ENCODE measurements at regions of chr4 and their contacts with region 1.

Region 1: GRCh38 chr4:69896530-69897116 is 34.2 kb upstream of the CSN1S1 start:
- DNase-seq: peak; percentile 42
- ATAC-seq: no peak
- H3K4me3 ChIP-seq: no peak overlapping the region
- H3K27ac ChIP-seq: no peak overlapping the region
- H3K4me1 ChIP-seq: no peaks in the 10 kb centered on the region
- H3K27me3 ChIP-seq: peaks cover 17% of the 10 kb centered on the region; the same call in 1 of the 2 replicates
- CTCF ChIP-seq: peak; percentile 66

Region 2: GRCh38 chr4:69707807-69708206 is 188.8 kb before region 1 on chr4:
- CTCF ChIA-PET with region 1: no interaction called
- POLR2A ChIA-PET with region 1: no interaction called
- intact Hi-C with region 1: no loop called
- DNase-seq: peak; percentile 67
- ATAC-seq: peak; percentile 73
- H3K4me3 ChIP-seq: no peak overlapping the region; the same call in 1 of the 2 replicates
- H3K27ac ChIP-seq: peak overlapping the region; percentile 61
- H3K4me1 ChIP-seq: peaks cover 13% of the 10 kb centered on the region
- H3K27me3 ChIP-seq: no peaks in the 10 kb centered on the region
- CTCF ChIP-seq: no peak

Region 3: DNA sequence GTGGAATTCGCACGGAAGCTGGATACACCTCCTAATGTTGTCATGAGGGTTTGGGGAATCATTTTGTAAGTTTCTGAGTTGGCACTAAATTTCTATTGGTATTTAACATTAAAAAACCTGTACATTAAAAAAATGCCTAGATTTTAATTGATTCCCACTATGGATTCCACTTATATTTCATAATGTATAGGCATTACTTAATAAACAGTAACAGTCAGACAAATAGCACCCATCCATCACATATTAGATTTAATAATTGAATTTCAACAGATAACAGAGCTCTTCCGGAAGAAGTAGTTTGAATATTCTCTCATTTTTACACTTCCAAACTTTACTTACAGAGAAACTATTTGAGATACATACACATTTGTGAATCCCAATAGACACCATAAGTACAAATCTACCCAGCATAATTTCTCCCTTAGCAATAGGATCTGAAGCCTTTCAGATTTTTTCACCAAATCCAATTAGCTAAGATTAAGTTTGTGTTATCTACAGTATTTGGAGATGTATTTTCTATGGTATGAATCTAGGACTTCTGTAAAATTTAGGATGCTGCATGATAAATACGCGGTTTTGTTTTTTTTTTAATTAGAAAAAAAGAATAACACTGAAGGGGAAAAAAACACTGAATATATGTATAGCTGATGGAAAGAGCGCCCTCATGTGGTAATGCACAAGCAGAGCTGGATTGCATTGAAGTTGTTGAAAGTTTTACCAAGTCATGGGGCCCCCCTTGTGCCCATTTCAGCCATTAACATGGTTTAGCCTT is 286.7 kb after region 1 on chr4:
- CTCF ChIA-PET with region 1: interaction called, 3 read pairs
- POLR2A ChIA-PET with region 1: no interaction called
- intact Hi-C with region 1: loop called (anchors 1 kb)
- DNase-seq: peak; percentile 71
- ATAC-seq: peak; percentile 70
- H3K4me3 ChIP-seq: no peak overlapping the region
- H3K27ac ChIP-seq: no peak overlapping the region
- H3K4me1 ChIP-seq: no peaks in the 10 kb centered on the region
- H3K27me3 ChIP-seq: peaks cover 27% of the 10 kb centered on the region; the same call in 1 of the 2 replicates
- CTCF ChIP-seq: peak; percentile 95

Region 4: GRCh38 chr4:70269674-70270073 is 373.1 kb after region 1 on chr4:
- CTCF ChIA-PET with region 1: no interaction called
- POLR2A ChIA-PET with region 1: no interaction called
- intact Hi-C with region 1: loop called (anchors 10 kb)
- DNase-seq: peak; percentile 50
- ATAC-seq: no peak; the same call in 1 of the 2 replicates
- H3K4me3 ChIP-seq: no peak overlapping the region
- H3K27ac ChIP-seq: no peak overlapping the region
- H3K4me1 ChIP-seq: no peaks in the 10 kb centered on the region
- H3K27me3 ChIP-seq: no peaks in the 10 kb centered on the region
- CTCF ChIP-seq: peak; percentile 60

Region 5: GRCh38 chr4:70559211-70559830 is 662.7 kb after region 1 on chr4:
- CTCF ChIA-PET with region 1: interaction called, 3 read pairs
- POLR2A ChIA-PET with region 1: no interaction called
- intact Hi-C with region 1: loop called (anchors 2 kb)
- DNase-seq: peak; percentile 79
- ATAC-seq: peak; percentile 82
- H3K4me3 ChIP-seq: no peak overlapping the region
- H3K27ac ChIP-seq: no peak overlapping the region
- H3K4me1 ChIP-seq: no peaks in the 10 kb centered on the region
- H3K27me3 ChIP-seq: peaks cover 18% of the 10 kb centered on the region
- CTCF ChIP-seq: peak; percentile 96